Heart right ventricle (tissue), 16 donors: ENCODE measurements at regions of chr7 and their contacts with region 1.

Region 1: DNA sequence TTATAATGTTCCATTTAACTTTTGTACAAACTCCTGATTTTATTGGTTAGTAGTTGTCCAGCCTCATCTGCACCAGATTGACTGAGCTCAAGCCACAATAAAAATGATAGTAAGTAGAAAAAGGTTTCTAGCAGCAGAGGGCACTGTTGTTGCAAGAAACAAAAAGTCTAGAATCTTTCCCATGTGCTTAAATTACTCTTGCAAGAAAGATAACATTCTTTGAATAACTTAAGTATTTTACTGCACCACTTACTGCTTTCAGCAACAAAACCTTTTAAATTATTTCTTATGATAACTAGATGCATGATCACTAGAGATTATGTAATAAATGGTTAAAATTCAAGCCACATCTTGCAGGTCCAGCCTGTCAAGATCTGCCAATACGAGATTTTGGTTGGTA is 27.0 kb downstream of the LMOD2 start:
- DNase-seq: no peak
- ATAC-seq: peak in 4 of 8 donors; percentile 36 to 59 (median 48)
- H3K4me3 ChIP-seq: no peak overlapping the region
- H3K27ac ChIP-seq: peak overlapping the region in 5 of 10 donors; percentile 15 to 75 (median 69)
- H3K4me1 ChIP-seq: peaks cover 0 to 48% (median 20%) of the 10 kb centered on the region in 9 donors
- H3K27me3 ChIP-seq: no peaks in the 10 kb centered on the region
- CTCF ChIP-seq: peak in 7 of 9 donors; percentile 53 to 73 (median 63)

Region 2: DNA sequence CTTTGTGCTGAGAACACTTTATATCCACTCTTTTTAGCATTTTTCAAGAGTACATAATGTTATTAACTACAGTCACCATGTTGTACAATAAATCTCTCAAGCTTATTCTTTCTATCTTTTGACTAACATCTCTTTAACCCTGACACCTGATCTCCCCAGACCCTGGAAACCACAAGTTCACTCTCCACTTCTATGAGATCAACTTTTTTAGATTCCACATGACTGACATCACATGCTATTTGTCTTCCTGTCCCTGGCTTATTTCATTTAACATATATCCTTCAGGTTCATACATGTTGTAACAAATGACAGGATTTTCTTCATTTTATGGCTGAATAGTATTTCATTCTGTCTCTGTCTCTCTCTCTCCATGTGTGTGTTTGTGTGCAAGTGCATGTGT is 498.4 kb before region 1 on chr7:
- intact Hi-C with region 1: no loop called
- DNase-seq: no peak
- ATAC-seq: no peak
- H3K4me3 ChIP-seq: no peak overlapping the region
- H3K27ac ChIP-seq: no peak overlapping the region
- H3K4me1 ChIP-seq: no peaks in the 10 kb centered on the region
- H3K27me3 ChIP-seq: no peaks in the 10 kb centered on the region
- CTCF ChIP-seq: no peak

Region 3: GRCh38 chr7:123580406-123581161 is 102.1 kb before region 1 on chr7:
- intact Hi-C with region 1: loop called in 1 of 10 experiments (anchors 5 kb)
- DNase-seq: peak in 1 of 2 donors; percentile 26
- ATAC-seq: peak; percentile 43 to 82 (median 76)
- H3K4me3 ChIP-seq: no peak overlapping the region
- H3K27ac ChIP-seq: peak overlapping the region in 1 of 10 donors; percentile 12
- H3K4me1 ChIP-seq: peaks cover 0 to 5% (median 0%) of the 10 kb centered on the region in 9 donors
- H3K27me3 ChIP-seq: no peaks in the 10 kb centered on the region
- CTCF ChIP-seq: peak; percentile 34 to 77 (median 64)

Region 4: DNA sequence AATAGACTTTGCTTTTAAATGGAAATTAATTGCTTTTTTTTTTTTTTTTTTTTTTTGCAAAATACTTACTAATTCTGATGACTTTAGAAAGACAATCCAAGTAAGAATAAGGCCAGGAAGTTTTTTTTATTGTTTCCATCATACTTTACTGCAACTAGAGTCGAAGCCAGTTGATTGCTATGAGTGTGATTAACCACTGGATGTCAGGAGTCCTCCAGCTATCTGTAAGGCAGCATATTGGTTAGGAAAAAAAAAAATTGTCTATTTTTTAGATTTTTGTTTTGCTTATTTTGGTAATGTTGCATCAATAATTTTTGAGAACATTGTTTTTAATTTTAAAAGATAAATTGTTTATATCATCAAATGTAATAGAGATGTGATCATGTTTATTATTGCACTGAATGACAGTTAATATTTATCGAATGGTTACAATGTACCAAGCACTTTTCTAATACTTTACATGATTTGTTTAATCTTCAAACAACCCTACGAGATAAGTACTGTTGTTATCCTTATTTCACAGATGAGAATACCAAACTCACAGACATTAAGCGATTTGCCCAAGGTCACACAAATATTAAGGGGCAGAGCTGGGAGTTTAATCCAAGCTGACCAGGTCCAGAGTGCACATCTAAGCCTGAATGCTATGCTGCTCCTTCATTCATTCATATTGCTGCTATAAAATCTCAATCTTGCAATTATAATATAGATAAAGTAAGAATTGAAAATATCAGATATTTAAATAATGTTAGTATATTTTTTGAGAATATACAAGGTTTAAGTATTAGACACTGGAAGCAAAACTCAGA is 46.9 kb before region 1 on chr7:
- intact Hi-C with region 1: loop called in 2 of 10 experiments (anchors 5 kb)
- DNase-seq: no peak
- ATAC-seq: peak in 7 of 8 donors; percentile 63 to 78 (median 73)
- H3K4me3 ChIP-seq: no peak overlapping the region
- H3K27ac ChIP-seq: peak overlapping the region in 2 of 10 donors; percentile 27 to 70
- H3K4me1 ChIP-seq: peaks cover 3 to 30% (median 9%) of the 10 kb centered on the region in 9 donors
- H3K27me3 ChIP-seq: no peaks in the 10 kb centered on the region
- CTCF ChIP-seq: peak in 8 of 9 donors; percentile 39 to 78 (median 63)

Region 5: DNA sequence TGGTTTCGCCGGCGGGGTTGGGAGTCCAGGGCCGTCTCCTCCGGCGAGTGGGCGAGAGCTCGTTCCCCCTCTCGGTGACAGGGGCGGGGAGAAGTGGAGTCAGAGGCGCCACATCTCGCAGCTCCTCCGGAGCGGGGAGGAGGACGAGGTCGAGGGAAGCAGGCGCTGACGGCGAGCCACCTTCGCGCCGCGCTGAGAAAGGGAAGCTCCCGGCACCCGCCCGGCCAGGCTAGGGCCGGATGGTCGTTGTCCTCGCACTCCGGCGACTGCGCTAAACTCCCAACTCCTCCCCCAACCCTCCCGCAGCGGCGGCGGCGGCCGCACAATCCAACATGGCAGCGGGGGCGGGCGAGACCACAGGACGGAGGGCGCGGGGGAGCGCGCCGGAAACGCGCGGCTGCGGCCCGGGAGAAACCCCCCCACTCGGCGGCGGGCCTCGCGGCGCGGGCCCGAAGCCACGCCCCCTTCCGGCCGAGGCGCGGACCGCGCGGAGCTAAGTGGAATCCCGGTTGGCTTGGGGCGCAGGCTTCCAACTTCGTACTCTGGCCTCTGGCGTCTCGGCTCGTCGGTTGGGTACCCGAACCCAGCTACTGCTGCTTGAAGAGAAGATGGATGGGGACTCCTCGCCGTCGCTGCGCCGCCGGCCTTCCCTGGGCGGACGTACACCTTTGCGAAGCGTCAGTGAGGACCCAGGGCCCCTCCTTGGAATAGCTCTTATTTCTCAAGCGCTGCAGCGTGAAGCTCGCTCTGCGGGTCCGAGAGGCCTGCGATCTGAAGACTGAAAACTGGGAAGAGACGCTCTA is 66.2 kb after region 1 on chr7 and contains the start of gene WASL:
- intact Hi-C with region 1: loop called in 1 of 10 experiments (anchors 10 kb)
- DNase-seq: peak; percentile 91 to 95
- ATAC-seq: peak; percentile 94 to 98 (median 96)
- H3K4me3 ChIP-seq: peak within 1 kb of the TSS; percentile 80 to 95 (median 89)
- H3K27ac ChIP-seq: peak within 1 kb of the TSS; percentile 94 to 99 (median 98)
- H3K4me1 ChIP-seq: peaks cover 0 to 73% (median 59%) of the 10 kb centered on the region in 9 donors
- H3K27me3 ChIP-seq: no peaks in the 10 kb centered on the region
- CTCF ChIP-seq: peak in 5 of 9 donors; percentile 5 to 33 (median 19)
- total RNA-seq, gene WASL: 21.6 to 30.0 (median 25.2) TPM

Region 6: DNA sequence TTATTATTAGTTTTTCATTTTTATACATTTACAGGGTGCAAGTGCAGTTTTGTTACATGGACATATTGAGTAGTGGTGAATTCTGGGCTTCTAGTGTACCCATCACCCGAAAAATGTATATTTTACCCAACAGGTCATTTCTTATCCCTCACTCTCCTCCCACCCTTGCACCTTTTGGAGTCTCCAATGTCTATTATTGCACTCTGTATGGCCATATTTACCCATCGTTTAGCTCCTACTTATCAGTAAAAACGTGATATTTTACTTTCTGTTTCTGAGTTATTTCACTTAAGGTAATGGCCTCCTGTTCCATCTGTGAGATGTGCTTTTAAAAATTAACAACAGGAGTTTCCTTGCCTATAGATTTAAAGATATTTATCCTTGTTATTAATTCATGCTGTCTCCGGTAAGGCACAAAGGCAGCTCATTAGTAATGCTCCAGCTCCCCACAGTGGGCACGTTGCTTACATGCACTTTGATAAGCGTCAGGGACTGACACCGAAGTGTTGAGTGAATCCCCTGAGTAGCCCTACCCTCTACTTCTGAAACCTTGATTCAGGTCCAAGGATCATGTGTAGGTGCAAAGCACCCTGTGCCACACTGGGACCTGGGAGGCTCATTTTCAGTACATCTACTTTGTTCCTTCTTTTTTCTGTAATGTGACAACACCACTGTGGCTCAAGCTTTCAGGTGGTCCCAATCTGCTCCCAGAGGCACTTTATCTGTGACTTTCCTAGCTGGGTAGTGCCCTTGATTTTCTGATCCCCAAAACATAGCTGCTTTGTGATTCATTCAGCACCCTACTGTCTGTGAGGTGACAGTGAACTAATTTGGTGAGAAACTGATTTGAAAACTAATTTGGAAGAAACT is 189.5 kb after region 1 on chr7:
- intact Hi-C with region 1: loop called in 4 of 10 experiments (anchors 5 to 10 kb)
- DNase-seq: peak; percentile 14 to 15
- ATAC-seq: peak; percentile 42 to 92 (median 82)
- H3K4me3 ChIP-seq: peak overlapping the region in 1 of 10 donors; percentile 12
- H3K27ac ChIP-seq: no peak overlapping the region
- H3K4me1 ChIP-seq: peaks cover 0 to 13% (median 0%) of the 10 kb centered on the region in 9 donors
- H3K27me3 ChIP-seq: no peaks in the 10 kb centered on the region
- CTCF ChIP-seq: peak in 8 of 9 donors; percentile 38 to 71 (median 60)